CD8-positive, alpha-beta T cell (primary cell): ENCODE measurements at regions of chr7 and their contacts with region 1.

Region 1: GRCh38 chr7:135211179-135211945 is at the start of gene WDR91:
- DNase-seq: peak; percentile 95 to 98 (median 96)
- ATAC-seq: peak; percentile 93
- H3K4me3 ChIP-seq: peak within 1 kb of the TSS; percentile 74 to 91
- H3K4me3 Mint-ChIP-seq: peak within 1 kb of the TSS; percentile 97
- H3K27ac ChIP-seq: peak within 1 kb of the TSS; percentile 80 to 91
- H3K27ac Mint-ChIP-seq: peak within 1 kb of the TSS; percentile 99
- H3K4me1 ChIP-seq: peaks cover 12% of the 10 kb centered on the region
- H3K4me1 Mint-ChIP-seq: peaks cover 42% of the 10 kb centered on the region
- H3K27me3 ChIP-seq: no peaks in the 10 kb centered on the region
- H3K27me3 Mint-ChIP-seq: no peaks in the 10 kb centered on the region
- CTCF ChIP-seq: no peak
- total RNA-seq, gene WDR91: 43.3 to 46.6 TPM

Region 2: DNA sequence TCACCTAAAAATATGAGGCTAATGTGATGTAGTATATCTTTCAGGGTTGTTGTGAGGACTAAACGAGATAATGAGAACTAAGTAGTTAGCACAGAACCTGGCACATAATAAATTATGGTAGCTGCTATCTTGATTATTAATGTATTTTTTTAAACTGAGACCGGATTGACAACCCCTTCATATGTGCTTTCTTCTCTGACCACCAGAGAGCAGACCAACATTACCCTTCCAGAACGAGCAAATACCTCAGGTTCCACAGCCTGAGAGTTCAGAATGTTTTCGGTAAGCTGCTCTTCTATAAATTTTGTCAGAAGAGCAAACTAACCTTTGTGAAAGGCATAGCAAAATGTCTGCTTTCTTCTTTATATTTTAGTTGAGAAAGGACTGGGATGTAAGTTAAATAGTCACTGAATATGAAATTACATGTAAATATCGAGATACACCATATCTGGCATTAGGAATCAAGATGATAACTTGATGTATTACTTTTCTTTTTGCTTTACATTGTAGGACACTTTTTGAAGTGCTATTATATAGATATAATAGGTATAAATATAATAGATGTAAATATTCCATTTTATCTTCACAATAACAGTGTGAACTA is 578.3 kb before region 1 on chr7:
- CTCF ChIA-PET with region 1: no interaction called
- POLR2A ChIA-PET with region 1: no interaction called
- intact Hi-C with region 1: no loop called
- DNase-seq: peak in 6 of 9 experiments; percentile 26 to 81 (median 46)
- ATAC-seq: peak; percentile 96
- H3K4me3 ChIP-seq: no peak overlapping the region
- H3K4me3 Mint-ChIP-seq: no peak overlapping the region
- H3K27ac ChIP-seq: no peak overlapping the region
- H3K27ac Mint-ChIP-seq: no peak overlapping the region
- H3K4me1 ChIP-seq: peaks cover 6% of the 10 kb centered on the region
- H3K4me1 Mint-ChIP-seq: peaks cover 18% of the 10 kb centered on the region
- H3K27me3 ChIP-seq: peaks cover 0 to 3% of the 10 kb centered on the region in 2 experiments
- H3K27me3 Mint-ChIP-seq: peaks cover 12% of the 10 kb centered on the region
- CTCF ChIP-seq: peak; percentile 72

Region 3: GRCh38 chr7:135147899-135148721 is 63.3 kb before region 1 on chr7 and contains the start of gene TMEM140:
- CTCF ChIA-PET with region 1: no interaction called
- POLR2A ChIA-PET with region 1: interaction called, 23 read pairs
- intact Hi-C with region 1: loop called (anchors 1 to 2 kb)
- DNase-seq: peak; percentile 36 to 91 (median 63)
- ATAC-seq: peak; percentile 78
- H3K4me3 ChIP-seq: peak within 1 kb of the TSS; percentile 60 to 70
- H3K4me3 Mint-ChIP-seq: peak within 1 kb of the TSS; percentile 87
- H3K27ac ChIP-seq: peak within 1 kb of the TSS; percentile 92 to 97
- H3K27ac Mint-ChIP-seq: peak within 1 kb of the TSS; percentile 97
- H3K4me1 ChIP-seq: peaks cover 47% of the 10 kb centered on the region
- H3K4me1 Mint-ChIP-seq: peaks cover 80% of the 10 kb centered on the region
- H3K27me3 ChIP-seq: no peaks in the 10 kb centered on the region
- H3K27me3 Mint-ChIP-seq: no peaks in the 10 kb centered on the region
- CTCF ChIP-seq: no peak
- total RNA-seq, gene TMEM140: 18.8 to 21.8 TPM

Region 4: GRCh38 chr7:135509903-135510602 is 298.7 kb after region 1 on chr7 and contains the start of gene CNOT4:
- CTCF ChIA-PET with region 1: no interaction called
- POLR2A ChIA-PET with region 1: no interaction called
- intact Hi-C with region 1: loop called (anchors 1 to 2 kb)
- DNase-seq: peak; percentile 94 to 98 (median 97)
- ATAC-seq: peak; percentile 94
- H3K4me3 ChIP-seq: peak within 1 kb of the TSS; percentile 80 to 84
- H3K4me3 Mint-ChIP-seq: no peak within 1 kb of the TSS
- H3K27ac ChIP-seq: peak within 1 kb of the TSS; percentile 78 to 95
- H3K27ac Mint-ChIP-seq: no peak within 1 kb of the TSS
- H3K4me1 ChIP-seq: peaks cover 26% of the 10 kb centered on the region
- H3K4me1 Mint-ChIP-seq: peaks cover 14% of the 10 kb centered on the region
- H3K27me3 ChIP-seq: no peaks in the 10 kb centered on the region
- H3K27me3 Mint-ChIP-seq: no peaks in the 10 kb centered on the region
- CTCF ChIP-seq: no peak
- total RNA-seq, gene CNOT4: 24.8 to 25.9 TPM

Region 5: DNA sequence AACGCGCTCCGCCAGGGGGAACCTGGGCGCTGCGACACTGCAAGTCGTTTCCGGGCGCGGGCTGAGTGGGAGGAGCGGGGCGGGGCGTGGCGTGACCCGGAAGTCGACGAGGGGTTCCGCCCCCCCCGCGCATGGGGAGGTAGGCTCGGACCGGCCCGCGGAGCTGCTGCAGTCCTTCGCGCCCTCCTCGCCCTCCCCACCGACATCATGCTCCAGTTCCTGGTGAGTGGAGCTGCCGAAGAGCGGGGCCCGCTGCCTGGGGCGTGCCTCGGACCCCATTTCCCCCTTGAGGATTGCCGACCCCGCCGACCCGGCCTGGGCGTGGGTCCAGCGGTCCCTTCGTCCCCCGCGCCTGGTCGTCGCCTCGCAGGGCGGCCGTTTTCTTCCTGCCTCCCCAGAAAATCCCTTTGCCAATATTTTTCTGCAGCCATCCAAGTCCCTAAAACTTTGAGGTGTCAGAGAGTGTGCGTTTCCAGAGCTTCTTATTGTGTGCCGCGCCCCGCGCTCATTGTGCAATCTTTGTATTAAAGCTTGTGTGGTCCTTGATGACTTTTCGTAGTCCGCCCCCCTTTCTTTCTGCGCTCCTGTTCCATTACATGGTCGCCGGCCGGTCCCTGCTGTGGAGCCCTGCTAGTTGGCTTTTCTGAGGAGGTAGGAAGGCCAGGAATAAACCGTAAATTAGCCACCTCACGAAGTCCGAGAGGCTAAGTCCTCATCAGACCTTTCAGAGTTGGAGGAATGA is 451.2 kb after region 1 on chr7 and contains the start of gene STMP1:
- CTCF ChIA-PET with region 1: no interaction called
- POLR2A ChIA-PET with region 1: no interaction called
- intact Hi-C with region 1: loop called (anchors 1 to 2 kb)
- DNase-seq: peak; percentile 91 to 99 (median 96)
- ATAC-seq: peak; percentile 99
- H3K4me3 ChIP-seq: peak within 1 kb of the TSS; percentile 72 to 76
- H3K4me3 Mint-ChIP-seq: peak within 1 kb of the TSS; percentile 90
- H3K27ac ChIP-seq: peak within 1 kb of the TSS; percentile 53 to 65
- H3K27ac Mint-ChIP-seq: peak within 1 kb of the TSS; percentile 88
- H3K4me1 ChIP-seq: peaks cover 20% of the 10 kb centered on the region
- H3K4me1 Mint-ChIP-seq: peaks cover 41% of the 10 kb centered on the region
- H3K27me3 ChIP-seq: no peaks in the 10 kb centered on the region
- H3K27me3 Mint-ChIP-seq: no peaks in the 10 kb centered on the region
- CTCF ChIP-seq: peak; percentile 64
- total RNA-seq, gene STMP1: 9.4 to 11.5 TPM